Psoas muscle (tissue), 8 donors: ENCODE measurements at regions of chr11 and their contacts with region 1.

Region 1: GRCh38 chr11:26549176-26549575 is 22.9 kb downstream of the MUC15 start:
- DNase-seq: no peak
- ATAC-seq: no peak
- H3K4me3 ChIP-seq: no peak overlapping the region
- H3K27ac ChIP-seq: no peak overlapping the region
- H3K4me1 ChIP-seq: no peaks in the 10 kb centered on the region
- H3K27me3 ChIP-seq: no peaks in the 10 kb centered on the region
- CTCF ChIP-seq: no peak

Region 2: DNA sequence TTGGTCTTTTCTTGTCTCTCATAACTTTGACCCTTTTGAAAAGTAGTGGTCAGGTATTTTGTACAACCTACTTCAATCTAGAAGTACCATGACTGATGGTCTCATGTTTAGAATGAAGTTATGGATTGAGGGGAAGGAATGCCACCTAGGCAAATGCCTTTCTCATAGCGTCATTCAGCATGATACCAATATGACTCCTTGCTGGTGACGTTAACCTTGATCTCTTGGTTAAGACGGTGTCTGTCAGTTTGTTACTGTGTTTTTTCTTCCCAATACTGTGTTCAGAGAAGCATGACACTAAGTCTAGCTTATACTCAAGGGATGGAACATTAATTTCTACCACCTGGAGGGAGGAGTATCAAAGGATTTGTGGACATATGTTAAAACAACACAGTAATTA is 1427.9 kb after region 1 on chr11:
- intact Hi-C with region 1: loop called in 1 of 2 experiments (anchors 10 kb)
- DNase-seq: no peak
- ATAC-seq: no peak
- H3K4me3 ChIP-seq: no peak overlapping the region
- H3K27ac ChIP-seq: no peak overlapping the region
- H3K4me1 ChIP-seq: no peaks in the 10 kb centered on the region
- H3K27me3 ChIP-seq: no peaks in the 10 kb centered on the region
- CTCF ChIP-seq: no peak